AG04449 (cell line): ENCODE measurements at regions of chr17 and their contacts with region 1.

Region 1: GRCh38 chr17:67293251-67294203 is 48.5 kb upstream of the HELZ start:
- DNase-seq: no peak
- H3K4me3 ChIP-seq: no peak overlapping the region
- CTCF ChIP-seq: peak; percentile 84

Region 2: DNA sequence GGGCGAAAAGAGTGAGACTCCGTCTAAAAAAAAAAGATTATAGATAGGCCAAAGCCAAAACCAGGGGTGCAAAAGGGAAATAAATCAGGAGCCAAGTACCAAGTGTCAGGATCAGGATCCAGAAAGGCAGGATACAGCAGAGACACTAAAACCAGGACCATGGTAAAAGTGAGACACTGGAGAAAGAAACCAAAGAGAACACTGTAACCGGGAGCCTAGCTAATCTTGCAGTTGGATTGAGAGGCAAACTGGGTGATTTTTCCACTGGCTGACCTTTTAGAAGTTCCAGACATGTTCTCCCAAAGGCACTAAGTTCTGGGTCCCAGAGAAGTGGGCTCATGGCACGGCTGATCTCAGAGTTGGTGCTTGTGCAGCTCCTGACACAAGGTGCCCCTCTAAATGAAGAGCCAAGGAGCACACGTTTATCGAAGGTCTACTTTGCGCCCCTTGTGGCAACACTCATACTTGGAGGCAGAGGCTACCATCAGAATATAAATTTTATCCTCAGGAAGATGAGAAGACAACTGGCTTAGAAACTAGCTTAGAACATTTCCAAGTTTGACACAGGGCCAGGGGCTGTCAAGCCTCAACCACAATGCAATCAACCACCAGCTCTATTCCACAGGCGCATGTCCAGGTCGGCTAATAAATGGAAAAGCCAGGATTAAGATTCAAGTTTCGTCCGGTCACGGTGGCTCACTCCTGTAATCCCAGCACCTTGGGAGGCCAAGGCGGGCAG is 21.0 kb before region 1 on chr17:
- CTCF ChIA-PET with region 1: interaction called, 23 read pairs
- POLR2A ChIA-PET with region 1: no interaction called
- DNase-seq: no peak
- H3K4me3 ChIP-seq: no peak overlapping the region
- CTCF ChIP-seq: peak; percentile 25

Region 3: GRCh38 chr17:67280279-67280678 is 13.2 kb before region 1 on chr17:
- CTCF ChIA-PET with region 1: interaction called, 18 read pairs
- POLR2A ChIA-PET with region 1: no interaction called
- DNase-seq: no peak
- H3K4me3 ChIP-seq: no peak overlapping the region
- CTCF ChIP-seq: no peak